ENCODE measurements at regions of chr1 and their contacts with region 1.

Region 1: GRCh38 chr1:25895365-25895993 is 10.7 kb downstream of the STMN1 start:
- DNase-seq: peak; percentile 94

Region 2: GRCh38 chr1:25997828-25998761 is 102.6 kb after region 1 on chr1 and contains the start of gene PAFAH2:
- in situ Hi-C with region 1: loop called (anchors 10 kb)
- DNase-seq: peak; percentile 99
- total RNA-seq, gene PAFAH2: 6.5 and 9.2 TPM in 2 replicates

Region 3: GRCh38 chr1:26035959-26036755 is 140.7 kb after region 1 on chr1:
- in situ Hi-C with region 1: no loop called
- DNase-seq: peak; percentile 80